Gastrocnemius medialis (tissue), 4 donors: ENCODE measurements at regions of chr4 and their contacts with region 1.

Region 1: DNA sequence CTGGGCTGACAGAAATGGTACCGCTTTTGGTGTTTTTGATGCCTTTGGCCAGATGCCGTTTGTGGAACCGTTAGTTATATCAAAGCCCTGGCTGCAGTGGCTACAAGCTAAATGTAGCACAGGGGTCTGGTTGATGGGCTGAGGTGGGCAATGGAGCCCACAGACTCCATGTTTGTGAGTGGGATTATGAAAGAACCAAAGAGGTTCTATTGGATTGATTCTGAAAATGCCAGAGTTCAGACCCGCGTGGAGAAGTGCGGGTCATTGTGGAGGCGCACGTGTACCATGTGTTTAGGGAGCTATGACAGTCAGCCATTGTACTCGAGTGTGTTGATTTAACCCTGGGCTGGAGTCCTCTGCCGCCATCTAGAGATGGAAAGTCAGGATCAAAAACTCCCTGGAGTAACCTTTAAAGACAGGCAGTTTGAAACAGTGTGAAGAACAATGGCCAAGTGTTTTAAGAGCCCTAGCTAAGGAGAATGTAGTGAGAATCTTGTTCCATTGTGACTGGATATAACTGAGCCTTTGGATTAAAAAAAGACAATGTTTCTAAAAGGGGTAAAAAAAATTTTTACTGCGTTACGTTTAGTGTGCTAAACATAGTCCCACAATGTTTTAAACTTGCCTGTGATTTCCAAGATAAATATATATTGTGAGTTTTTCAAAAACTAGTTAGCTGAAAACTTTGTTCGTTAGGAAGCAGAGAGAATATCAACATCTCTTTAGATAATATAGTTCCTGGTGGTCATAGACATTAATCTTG is 12.7 kb downstream of the ART3 start:
- DNase-seq: peak; percentile 52 to 67
- ATAC-seq: peak; percentile 82 to 86
- H3K4me3 ChIP-seq: peak overlapping the region; percentile 10 to 46 (median 37)
- H3K27ac ChIP-seq: peak overlapping the region; percentile 80 to 93 (median 84)
- H3K4me1 ChIP-seq: peaks cover 75 to 85% of the 10 kb centered on the region in 2 donors
- H3K27me3 ChIP-seq: no peaks in the 10 kb centered on the region
- CTCF ChIP-seq: peak; percentile 35 to 70 (median 66)
- POLR2A ChIP-seq: no peak

Region 2: DNA sequence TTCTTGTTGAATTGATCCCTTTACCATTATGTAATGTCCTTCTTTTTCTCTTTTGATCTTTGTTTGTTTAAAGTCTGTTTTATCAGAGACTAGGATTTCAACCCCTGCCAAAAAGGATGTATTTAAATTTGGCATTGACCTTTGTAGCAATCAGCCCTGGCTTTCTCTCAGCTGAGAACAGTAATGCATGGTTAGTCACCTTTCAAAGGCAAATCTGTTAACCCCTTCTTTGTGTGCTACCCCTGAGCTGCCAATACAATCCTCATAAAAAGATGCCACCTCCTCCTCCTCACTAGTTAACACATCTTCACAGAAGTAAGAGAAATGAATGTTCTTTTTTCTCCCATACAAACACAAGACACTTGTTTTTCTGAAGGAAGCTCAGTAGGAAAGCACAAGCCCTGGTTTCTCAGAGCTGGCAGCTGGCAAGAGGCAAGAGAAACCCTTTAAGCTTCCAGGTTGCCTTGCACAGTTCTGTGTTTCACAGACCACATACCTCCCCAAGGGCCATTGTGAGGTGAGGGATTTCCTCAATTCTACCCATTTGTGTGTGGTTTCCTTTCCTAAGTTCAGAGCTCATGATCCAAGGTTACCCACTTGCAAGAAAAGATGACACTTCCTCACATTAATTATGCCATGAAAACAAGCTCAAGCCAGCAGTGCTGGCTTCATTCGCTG is 695.6 kb before region 1 on chr4:
- in situ Hi-C with region 1: no loop called
- intact Hi-C with region 1: no loop called
- DNase-seq: no peak
- ATAC-seq: no peak
- H3K4me3 ChIP-seq: no peak overlapping the region
- H3K27ac ChIP-seq: no peak overlapping the region
- H3K4me1 ChIP-seq: no peaks in the 10 kb centered on the region
- H3K27me3 ChIP-seq: no peaks in the 10 kb centered on the region
- CTCF ChIP-seq: no peak
- POLR2A ChIP-seq: no peak

Region 3: DNA sequence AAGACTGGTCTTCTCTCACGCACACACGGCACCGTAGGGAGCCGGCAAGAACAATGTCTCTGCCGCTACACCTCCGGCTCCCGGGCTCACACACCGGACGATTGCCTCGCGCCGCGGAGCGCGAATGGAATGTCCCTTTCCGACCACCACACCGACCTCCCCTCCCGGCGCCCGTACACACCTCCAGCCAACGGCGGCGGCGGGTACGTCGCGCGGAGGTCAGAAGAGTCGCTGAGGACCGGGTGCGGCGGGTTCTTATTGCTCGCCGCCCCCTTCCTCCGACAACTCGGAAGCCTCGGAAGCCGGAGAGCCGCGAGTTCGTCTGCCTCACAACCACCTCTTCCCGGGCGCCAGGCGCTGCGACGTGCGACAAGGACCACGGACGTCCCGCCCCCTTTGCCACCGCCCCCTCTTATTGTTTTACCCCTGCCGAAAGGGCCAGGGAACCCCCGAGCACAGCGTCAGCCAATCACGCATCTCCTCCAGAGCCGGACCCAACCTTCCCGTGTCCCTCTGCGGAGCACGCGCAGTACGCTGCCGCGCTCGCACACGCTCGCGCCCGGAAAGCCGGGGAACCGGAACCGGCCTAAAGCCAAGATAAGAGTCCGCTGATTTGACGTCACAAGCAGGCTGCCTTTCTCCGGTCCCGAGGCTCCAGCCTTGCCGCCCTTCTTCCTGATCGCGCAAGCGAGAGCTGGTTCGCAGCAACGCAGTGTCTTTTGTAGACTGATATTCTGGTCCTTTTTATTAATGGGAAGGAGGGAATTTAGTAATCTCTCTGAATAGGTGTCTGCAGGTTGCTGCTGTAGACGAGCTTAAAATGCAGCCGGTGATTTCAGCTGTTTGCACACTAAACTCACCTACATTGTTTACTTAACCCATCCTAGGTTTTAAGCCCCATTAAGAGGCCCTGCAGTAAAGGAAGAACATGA is 413.9 kb before region 1 on chr4 and contains the start of gene G3BP2:
- in situ Hi-C with region 1: no loop called
- intact Hi-C with region 1: loop called (anchors 10 kb)
- DNase-seq: peak; percentile 98 to 99
- ATAC-seq: peak; percentile 92 to 94
- H3K4me3 ChIP-seq: peak within 1 kb of the TSS; percentile 80 to 98 (median 95)
- H3K27ac ChIP-seq: peak within 1 kb of the TSS; percentile 96 to 99 (median 98)
- H3K4me1 ChIP-seq: peaks cover 42 to 43% of the 10 kb centered on the region in 2 donors
- H3K27me3 ChIP-seq: no peaks in the 10 kb centered on the region
- CTCF ChIP-seq: peak in 1 of 5 experiments; percentile 31
- POLR2A ChIP-seq: peak; percentile 97
- total RNA-seq, gene G3BP2: 123 to 226 (median 132) TPM

Region 4: DNA sequence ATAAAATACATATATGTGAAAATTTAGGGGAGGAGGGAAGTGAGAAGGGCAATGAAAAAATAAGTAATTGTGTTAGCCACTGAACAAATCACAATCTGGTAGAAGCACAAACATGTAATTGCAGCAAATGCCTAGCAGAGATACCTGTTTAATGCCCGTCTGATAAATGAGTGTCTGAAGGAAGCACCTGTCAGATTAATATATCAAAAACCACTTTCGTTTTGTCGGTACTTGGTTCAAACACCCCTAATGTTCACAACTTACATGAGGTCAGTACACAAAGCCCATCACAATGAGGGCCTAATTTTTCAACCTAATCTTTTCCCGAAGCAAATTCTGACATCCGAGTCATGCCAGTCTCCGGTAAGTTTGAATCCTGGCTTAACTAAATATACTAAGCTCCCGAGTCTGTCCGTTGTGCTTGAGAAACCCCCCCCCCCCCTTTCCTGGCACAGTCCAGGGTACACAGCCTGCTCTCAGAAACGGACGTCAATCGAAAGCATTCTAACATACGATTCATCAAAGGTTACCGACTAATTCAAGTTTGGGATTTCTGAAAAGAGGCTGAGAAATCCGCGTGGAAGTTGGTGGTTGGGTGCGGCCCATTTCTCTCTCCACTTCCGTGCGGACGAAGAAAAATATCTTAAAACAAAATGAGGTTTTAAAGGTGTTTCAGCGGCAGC is 97.2 kb before region 1 on chr4:
- in situ Hi-C with region 1: no loop called
- intact Hi-C with region 1: loop called (anchors 1 kb)
- DNase-seq: no peak
- ATAC-seq: peak in 1 of 2 donors; percentile 18
- H3K4me3 ChIP-seq: peak overlapping the region; percentile 72 to 97 (median 88)
- H3K27ac ChIP-seq: peak overlapping the region; percentile 84 to 90 (median 87)
- H3K4me1 ChIP-seq: peaks cover 19 to 21% of the 10 kb centered on the region in 2 donors
- H3K27me3 ChIP-seq: no peaks in the 10 kb centered on the region
- CTCF ChIP-seq: no peak
- POLR2A ChIP-seq: no peak

Region 5: GRCh38 chr4:75995727-75996126 is 91.5 kb before region 1 on chr4:
- in situ Hi-C with region 1: no loop called
- intact Hi-C with region 1: loop called (anchors 1 kb)
- DNase-seq: no peak
- ATAC-seq: peak in 1 of 2 donors; percentile 41
- H3K4me3 ChIP-seq: no peak overlapping the region
- H3K27ac ChIP-seq: no peak overlapping the region
- H3K4me1 ChIP-seq: peaks cover 0 to 6% of the 10 kb centered on the region in 2 donors
- H3K27me3 ChIP-seq: no peaks in the 10 kb centered on the region
- CTCF ChIP-seq: peak; percentile 62 to 76 (median 65)
- POLR2A ChIP-seq: no peak

Region 6: DNA sequence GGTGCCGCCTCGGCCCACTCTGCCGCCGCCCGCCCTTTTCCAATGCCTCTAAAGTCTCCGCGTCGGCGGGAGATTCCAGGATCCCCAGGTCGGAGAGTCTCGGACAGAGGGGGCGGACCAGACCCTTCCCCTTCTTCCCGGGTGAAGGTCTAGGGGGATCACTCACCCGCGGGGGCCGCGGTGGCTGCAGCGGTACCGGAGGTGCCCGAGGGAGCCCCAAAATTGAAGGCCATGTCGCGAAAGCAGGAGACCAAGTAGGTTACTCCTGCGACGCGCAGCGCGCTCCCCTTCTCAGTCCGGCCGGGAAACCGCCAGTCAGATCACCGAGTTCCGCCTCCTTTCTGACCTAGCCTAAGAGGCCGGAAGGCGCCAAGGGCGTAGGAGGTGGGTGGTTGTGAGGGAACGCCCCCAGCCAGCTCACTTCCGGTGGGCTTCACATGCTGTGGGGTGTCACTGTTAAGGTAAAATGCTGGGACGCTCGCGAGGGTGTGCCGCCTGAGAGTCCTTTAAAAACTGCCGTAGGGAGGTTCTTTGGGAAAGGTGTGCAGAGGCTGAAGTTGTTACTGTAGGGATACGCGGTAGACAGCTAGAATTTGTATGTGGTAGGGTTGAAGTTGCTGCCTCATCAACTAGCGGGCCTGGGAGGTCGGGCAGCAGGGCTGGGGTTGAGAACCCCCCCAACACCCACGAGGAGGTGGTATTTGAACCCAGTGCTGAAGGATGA is 61.1 kb after region 1 on chr4 and contains the start of gene NUP54:
- in situ Hi-C with region 1: no loop called
- intact Hi-C with region 1: loop called (anchors 5 kb)
- DNase-seq: peak; percentile 84 to 91
- ATAC-seq: peak; percentile 98 to 99
- H3K4me3 ChIP-seq: peak within 1 kb of the TSS; percentile 66 to 99 (median 89)
- H3K27ac ChIP-seq: peak within 1 kb of the TSS; percentile 82 to 98 (median 92)
- H3K4me1 ChIP-seq: peaks cover 31 to 36% of the 10 kb centered on the region in 2 donors
- H3K27me3 ChIP-seq: no peaks in the 10 kb centered on the region
- CTCF ChIP-seq: no peak
- POLR2A ChIP-seq: peak; percentile 81 to 82
- total RNA-seq, gene NUP54: 15.7 to 22.8 (median 20.0) TPM

Region 7: GRCh38 chr4:76198411-76199237 is 111.4 kb after region 1 on chr4:
- in situ Hi-C with region 1: no loop called
- intact Hi-C with region 1: loop called (anchors 5 kb)
- DNase-seq: peak; percentile 74 to 77
- ATAC-seq: peak; percentile 41
- H3K4me3 ChIP-seq: peak overlapping the region in 3 of 4 donors; percentile 9 to 39 (median 15)
- H3K27ac ChIP-seq: peak overlapping the region; percentile 90 to 97 (median 96)
- H3K4me1 ChIP-seq: peaks cover 94 to 97% of the 10 kb centered on the region in 2 donors
- H3K27me3 ChIP-seq: no peaks in the 10 kb centered on the region
- CTCF ChIP-seq: no peak
- POLR2A ChIP-seq: no peak

Region 8: GRCh38 chr4:76301068-76301774 is 214.0 kb after region 1 on chr4:
- in situ Hi-C with region 1: no loop called
- intact Hi-C with region 1: loop called (anchors 5 kb)
- DNase-seq: peak; percentile 77 to 88
- ATAC-seq: peak; percentile 92 to 95
- H3K4me3 ChIP-seq: no peak overlapping the region
- H3K27ac ChIP-seq: peak overlapping the region; percentile 84 to 97 (median 92)
- H3K4me1 ChIP-seq: peaks cover 39 to 49% of the 10 kb centered on the region in 2 donors
- H3K27me3 ChIP-seq: no peaks in the 10 kb centered on the region
- CTCF ChIP-seq: no peak
- POLR2A ChIP-seq: peak in 1 of 2 donors; percentile 34